Activated CD4-positive, alpha-beta T cell treated with anti-CD3 and anti-CD28 coated beads for 36 hours (primary cell): ENCODE measurements at regions of chr3 and their contacts with region 1.

Region 1: DNA sequence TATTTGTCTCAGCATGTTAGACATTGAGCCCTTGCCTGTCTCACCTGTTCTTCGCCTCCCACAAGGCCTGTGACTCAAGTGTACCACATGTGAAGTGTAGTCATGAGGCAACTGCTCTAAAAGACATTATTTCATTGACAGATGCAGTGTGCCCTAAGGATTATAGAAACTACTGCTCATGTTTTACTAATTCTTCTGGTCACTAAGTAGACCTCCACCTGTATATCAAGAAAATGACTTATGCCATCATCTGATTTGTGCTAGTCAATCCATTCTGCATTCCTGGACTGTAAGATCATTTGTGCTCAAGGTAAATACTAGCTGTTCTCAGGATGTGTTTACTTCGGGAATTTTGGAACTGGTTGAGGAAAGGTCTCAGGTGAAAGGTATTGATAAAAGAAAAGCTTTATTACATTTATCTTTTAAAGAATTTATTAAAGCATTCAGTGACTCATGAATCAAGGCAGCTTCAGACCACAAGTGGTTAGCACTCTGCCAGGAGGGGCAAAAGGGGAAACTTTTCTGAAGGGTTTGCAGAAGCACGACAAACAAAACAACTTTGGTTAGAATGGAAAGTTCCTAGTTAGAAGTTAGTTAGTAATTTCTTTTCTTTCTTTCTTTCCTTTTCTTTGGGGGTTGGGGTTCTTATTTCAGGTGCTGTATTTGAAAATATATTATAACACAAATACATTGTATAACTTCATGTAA is 465.3 kb upstream of the CBLB start:
- DNase-seq: peak; percentile 84
- ATAC-seq: peak; percentile 70
- H3K4me3 Mint-ChIP-seq: peak overlapping the region; percentile 67
- H3K27ac Mint-ChIP-seq: peak overlapping the region; percentile 97
- H3K4me1 Mint-ChIP-seq: peaks cover 89% of the 10 kb centered on the region
- H3K27me3 Mint-ChIP-seq: no peaks in the 10 kb centered on the region

Region 2: DNA sequence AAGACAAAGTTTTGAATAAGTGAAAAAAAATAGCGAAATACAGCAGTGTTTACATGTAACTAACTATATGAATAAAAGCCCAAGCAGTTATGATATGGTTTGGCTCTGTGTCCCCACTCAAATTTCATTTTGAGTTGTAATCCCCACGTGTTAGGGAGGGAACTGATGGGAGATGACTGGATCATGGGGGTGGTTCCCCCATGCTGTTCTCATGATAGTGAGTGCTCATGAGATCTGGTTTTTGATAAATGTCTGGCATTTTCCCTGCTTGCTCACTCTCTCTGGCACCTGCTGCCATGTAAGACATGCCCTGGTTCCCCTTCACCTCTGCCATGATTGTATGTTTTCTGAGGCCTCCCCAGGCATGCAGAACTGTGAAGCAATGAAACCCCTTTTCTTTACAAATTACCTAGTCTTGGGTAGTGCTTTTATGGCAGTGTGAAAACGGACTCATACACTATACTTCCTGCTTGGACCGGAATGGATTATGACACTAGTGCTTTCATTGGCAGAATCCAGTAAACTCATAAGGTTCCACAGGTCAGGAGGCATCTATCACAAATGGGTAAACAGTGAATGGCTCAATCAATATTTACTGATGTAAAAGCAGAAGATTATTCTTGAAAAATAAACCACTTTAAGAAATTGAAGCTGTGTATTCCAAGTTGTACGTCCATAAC is 657.3 kb before region 1 on chr3:
- CTCF ChIA-PET with region 1: no interaction called
- POLR2A ChIA-PET with region 1: no interaction called
- intact Hi-C with region 1: loop called (anchors 1 to 5 kb)
- DNase-seq: peak; percentile 74
- ATAC-seq: peak; percentile 94
- H3K4me3 Mint-ChIP-seq: peak overlapping the region; percentile 27
- H3K27ac Mint-ChIP-seq: peak overlapping the region; percentile 87
- H3K4me1 Mint-ChIP-seq: peaks cover 27% of the 10 kb centered on the region
- H3K27me3 Mint-ChIP-seq: no peaks in the 10 kb centered on the region

Region 3: DNA sequence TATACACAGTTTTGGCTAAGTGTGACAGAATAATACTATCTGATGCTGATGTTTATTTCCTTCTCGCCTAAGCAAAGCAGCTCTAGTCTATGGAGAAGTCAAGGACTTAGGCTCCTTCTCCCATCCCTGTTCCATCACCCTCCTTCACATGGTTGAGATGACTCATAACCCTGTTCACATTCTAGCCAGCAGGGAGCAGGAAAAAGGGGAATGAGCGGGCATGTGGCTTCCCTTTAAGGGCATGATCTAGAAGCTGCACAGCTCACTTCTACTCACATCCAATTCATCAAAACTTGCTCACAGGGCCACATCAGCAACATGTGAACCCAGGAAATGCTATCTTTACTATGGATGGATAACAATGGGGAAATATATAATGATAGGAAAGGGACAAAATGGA is 506.1 kb before region 1 on chr3:
- CTCF ChIA-PET with region 1: no interaction called
- POLR2A ChIA-PET with region 1: interaction called, 3 read pairs
- intact Hi-C with region 1: loop called (anchors 1 kb)
- DNase-seq: peak; percentile 36
- ATAC-seq: no peak
- H3K4me3 Mint-ChIP-seq: peak overlapping the region; percentile 57
- H3K27ac Mint-ChIP-seq: peak overlapping the region; percentile 100
- H3K4me1 Mint-ChIP-seq: peaks cover 88% of the 10 kb centered on the region
- H3K27me3 Mint-ChIP-seq: no peaks in the 10 kb centered on the region

Region 4: GRCh38 chr3:106013971-106014370 is 320.1 kb before region 1 on chr3:
- CTCF ChIA-PET with region 1: interaction called, 5 read pairs
- POLR2A ChIA-PET with region 1: no interaction called
- intact Hi-C with region 1: loop called (anchors 2 kb)
- DNase-seq: peak; percentile 19
- ATAC-seq: peak; percentile 72
- H3K4me3 Mint-ChIP-seq: no peak overlapping the region
- H3K27ac Mint-ChIP-seq: peak overlapping the region; percentile 68
- H3K4me1 Mint-ChIP-seq: peaks cover 50% of the 10 kb centered on the region
- H3K27me3 Mint-ChIP-seq: no peaks in the 10 kb centered on the region

Region 5: GRCh38 chr3:106232956-106233355 is 101.1 kb before region 1 on chr3:
- CTCF ChIA-PET with region 1: no interaction called
- POLR2A ChIA-PET with region 1: no interaction called
- intact Hi-C with region 1: loop called (anchors 5 kb)
- DNase-seq: no peak
- ATAC-seq: no peak
- H3K4me3 Mint-ChIP-seq: no peak overlapping the region
- H3K27ac Mint-ChIP-seq: peak overlapping the region; percentile 52
- H3K4me1 Mint-ChIP-seq: peaks cover 46% of the 10 kb centered on the region
- H3K27me3 Mint-ChIP-seq: no peaks in the 10 kb centered on the region

Region 6: DNA sequence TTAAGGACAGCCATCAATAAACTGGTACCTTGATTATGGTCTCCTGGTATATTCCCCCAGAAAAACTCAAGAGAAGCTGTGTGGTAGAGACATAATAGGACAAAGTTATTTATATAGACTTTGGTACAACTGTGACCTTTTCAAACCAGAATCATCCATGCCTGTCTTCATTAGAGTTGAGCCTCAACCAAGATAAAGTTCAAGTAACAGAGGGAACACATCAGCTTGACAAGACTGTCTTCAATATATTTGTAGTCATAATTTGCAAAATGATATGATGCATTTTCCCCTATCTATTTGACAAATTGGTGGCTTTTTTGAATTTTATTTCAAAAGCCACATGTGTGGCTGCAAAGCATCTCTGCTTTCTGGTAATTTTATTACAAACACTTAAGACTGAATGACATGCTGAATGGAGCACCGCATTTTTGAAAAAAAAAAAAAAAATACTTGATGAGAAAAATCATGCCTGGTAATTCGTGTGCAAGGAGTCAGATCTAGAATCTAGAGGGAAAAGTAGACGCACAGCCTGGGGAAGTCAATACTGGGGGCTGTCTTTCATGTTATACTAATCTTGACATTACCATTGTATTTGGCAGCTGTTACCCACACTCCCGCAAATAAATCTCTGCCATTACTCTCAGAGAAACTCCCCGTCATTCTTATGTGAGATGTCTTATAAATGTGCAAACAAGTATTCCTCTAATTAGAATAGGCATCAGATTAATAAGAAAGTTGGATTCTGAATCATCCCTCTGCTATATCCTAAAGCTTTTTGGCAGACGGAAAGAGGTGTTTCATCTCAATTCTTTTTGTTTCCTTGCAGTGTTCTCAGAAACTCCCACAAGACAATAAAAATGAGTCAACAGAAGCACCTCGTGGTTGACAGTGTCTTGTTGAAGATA is 89.5 kb after region 1 on chr3:
- CTCF ChIA-PET with region 1: interaction called, 9 read pairs
- POLR2A ChIA-PET with region 1: interaction called, 4 read pairs
- intact Hi-C with region 1: loop called (anchors 1 kb)
- DNase-seq: peak; percentile 59
- ATAC-seq: peak; percentile 70
- H3K4me3 Mint-ChIP-seq: peak overlapping the region; percentile 47
- H3K27ac Mint-ChIP-seq: peak overlapping the region; percentile 93
- H3K4me1 Mint-ChIP-seq: peaks cover 60% of the 10 kb centered on the region
- H3K27me3 Mint-ChIP-seq: no peaks in the 10 kb centered on the region

Region 7: GRCh38 chr3:106452096-106452495 is 118.0 kb after region 1 on chr3:
- CTCF ChIA-PET with region 1: no interaction called
- POLR2A ChIA-PET with region 1: no interaction called
- intact Hi-C with region 1: no loop called
- DNase-seq: no peak
- ATAC-seq: no peak
- H3K4me3 Mint-ChIP-seq: no peak overlapping the region
- H3K27ac Mint-ChIP-seq: no peak overlapping the region
- H3K4me1 Mint-ChIP-seq: peaks cover 16% of the 10 kb centered on the region
- H3K27me3 Mint-ChIP-seq: no peaks in the 10 kb centered on the region

Region 8: DNA sequence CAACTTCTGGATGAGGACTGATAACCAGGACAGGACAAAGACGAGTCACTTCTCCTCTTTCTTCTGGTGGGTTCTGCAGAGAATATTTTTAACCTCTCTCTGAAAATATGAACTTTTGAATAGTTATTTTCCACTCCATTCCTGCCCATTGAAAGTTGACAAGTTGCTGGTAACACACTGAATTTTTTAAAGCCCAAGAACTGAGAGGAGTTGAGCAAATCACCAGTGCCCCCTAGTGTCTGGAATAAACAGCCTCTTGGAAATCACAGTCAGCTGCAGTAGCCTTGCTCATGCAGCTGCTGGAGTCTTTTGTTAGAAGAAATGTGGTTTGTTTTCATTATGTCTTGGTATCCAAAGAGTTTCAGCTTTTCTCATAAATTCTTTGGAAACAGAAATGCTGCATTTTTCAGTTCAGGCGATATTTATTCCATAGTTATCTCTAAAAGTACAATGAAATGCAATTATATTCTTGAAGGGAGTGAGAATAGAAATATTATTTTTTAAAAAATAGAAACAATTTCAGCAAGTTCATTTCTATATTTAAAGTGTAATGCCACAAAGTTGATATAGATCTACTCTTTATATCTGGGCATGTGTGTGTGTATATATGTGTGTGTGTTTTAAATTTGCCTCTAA is 275.7 kb after region 1 on chr3:
- CTCF ChIA-PET with region 1: interaction called, 15 read pairs
- POLR2A ChIA-PET with region 1: no interaction called
- intact Hi-C with region 1: loop called (anchors 1 kb)
- DNase-seq: peak; percentile 78
- ATAC-seq: peak; percentile 81
- H3K4me3 Mint-ChIP-seq: no peak overlapping the region
- H3K27ac Mint-ChIP-seq: peak overlapping the region; percentile 81
- H3K4me1 Mint-ChIP-seq: peaks cover 29% of the 10 kb centered on the region
- H3K27me3 Mint-ChIP-seq: peaks cover 4% of the 10 kb centered on the region